Dorsolateral prefrontal cortex (tissue), 120 donors: ENCODE measurements at regions of chr19 and their contacts with region 1.

Region 1: GRCh38 chr19:47514869-47515588 is at the start of gene NAPA:
- DNase-seq: peak; percentile 100
- H3K4me3 ChIP-seq: peak within 1 kb of the TSS; percentile 70 to 100 (median 98)
- H3K27ac ChIP-seq: peak within 1 kb of the TSS; percentile 82 to 99 (median 96)
- H3K27me3 ChIP-seq: no peaks in the 10 kb centered on the region
- CTCF ChIP-seq: peak in 10 of 56 donors; percentile 2 to 100 (median 99)
- total RNA-seq, gene NAPA: 102 to 294 (median 206) TPM

Region 2: DNA sequence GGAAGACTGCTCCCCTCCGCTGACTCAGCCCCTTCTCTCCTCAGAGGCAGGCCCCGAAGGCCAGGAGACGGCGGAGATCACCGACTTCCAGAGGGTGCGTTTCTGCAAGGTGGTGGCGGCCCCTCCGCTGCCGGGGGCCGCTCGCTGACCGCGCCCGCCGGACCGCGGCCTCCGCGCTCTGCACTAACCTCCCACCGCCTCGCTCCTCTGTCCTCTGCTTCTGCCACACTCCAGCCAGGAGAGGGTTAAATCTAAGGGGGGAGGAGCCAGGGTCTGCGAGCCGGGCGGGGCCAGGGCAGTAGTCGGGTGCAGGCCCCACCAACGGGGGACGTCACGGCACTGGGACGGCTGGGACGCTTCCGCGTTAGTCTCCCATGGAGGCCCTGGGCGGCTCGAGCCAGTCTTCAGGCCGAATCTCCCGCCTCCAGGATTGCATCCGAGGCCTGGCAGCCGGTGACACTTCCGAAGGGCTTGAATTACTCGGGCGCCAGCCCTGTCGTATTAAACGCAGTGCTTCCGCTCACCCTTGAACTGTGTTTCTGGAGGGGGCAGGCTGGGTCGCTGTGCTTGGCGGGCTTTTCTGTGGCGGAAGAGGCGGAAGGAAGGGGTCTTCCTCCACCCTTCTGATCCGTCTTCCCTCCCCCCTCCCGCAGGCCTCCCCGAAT is 241.6 kb before region 1 on chr19:
- intact Hi-C with region 1: loop called in 1 of 2 experiments (anchors 10 kb)
- DNase-seq: peak; percentile 82 to 94 (median 91)
- H3K4me3 ChIP-seq: peak overlapping the region; percentile 62 to 96 (median 81)
- H3K27ac ChIP-seq: peak overlapping the region; percentile 68 to 99 (median 96)
- H3K27me3 ChIP-seq: no peaks in the 10 kb centered on the region
- CTCF ChIP-seq: peak in 9 of 56 donors; percentile 4 to 20 (median 6)

Region 3: DNA sequence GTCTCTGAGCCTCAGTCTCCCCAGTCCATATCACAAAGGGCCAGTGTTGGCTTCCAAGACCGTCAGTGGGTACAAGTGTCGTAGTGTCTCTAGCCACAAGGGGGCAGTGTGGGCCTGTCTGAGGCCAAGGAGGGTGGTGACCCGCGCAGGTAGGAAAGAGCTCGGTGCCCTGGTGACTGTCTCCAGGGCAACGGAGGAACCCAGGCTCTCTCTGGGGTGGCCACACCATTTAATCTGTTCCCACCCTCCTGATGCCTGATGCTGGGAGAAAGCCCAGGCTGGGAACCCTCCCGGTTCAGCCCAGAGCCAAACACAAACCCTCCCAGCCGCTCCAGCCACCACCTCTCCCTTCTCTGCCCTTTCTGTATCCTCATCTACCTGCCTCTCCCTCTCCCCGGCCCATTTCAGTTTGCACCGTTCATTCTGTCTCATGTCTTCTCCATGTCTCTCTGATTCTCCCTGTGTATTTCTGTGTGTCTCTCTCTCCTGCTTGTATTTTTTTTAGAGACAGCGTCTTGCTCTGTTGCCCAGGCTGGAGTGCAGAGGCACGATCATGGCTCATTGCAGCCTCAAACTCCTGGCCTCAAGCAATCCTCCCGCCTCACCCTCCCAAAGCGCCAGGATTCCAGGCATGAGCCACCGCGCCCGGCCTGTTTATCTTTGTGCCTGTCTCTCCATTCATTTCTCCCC is 78.2 kb before region 1 on chr19:
- intact Hi-C with region 1: loop called (anchors 2 to 5 kb)
- DNase-seq: peak; percentile 68 to 94 (median 84)
- H3K4me3 ChIP-seq: peak overlapping the region in 9 of 59 donors; percentile 1 to 40 (median 24)
- H3K27ac ChIP-seq: peak overlapping the region in 35 of 59 donors; percentile 3 to 83 (median 38)
- H3K27me3 ChIP-seq: peaks cover 0 to 9% (median 0%) of the 10 kb centered on the region in 45 donors
- CTCF ChIP-seq: peak; percentile 34 to 98 (median 92)

Region 4: DNA sequence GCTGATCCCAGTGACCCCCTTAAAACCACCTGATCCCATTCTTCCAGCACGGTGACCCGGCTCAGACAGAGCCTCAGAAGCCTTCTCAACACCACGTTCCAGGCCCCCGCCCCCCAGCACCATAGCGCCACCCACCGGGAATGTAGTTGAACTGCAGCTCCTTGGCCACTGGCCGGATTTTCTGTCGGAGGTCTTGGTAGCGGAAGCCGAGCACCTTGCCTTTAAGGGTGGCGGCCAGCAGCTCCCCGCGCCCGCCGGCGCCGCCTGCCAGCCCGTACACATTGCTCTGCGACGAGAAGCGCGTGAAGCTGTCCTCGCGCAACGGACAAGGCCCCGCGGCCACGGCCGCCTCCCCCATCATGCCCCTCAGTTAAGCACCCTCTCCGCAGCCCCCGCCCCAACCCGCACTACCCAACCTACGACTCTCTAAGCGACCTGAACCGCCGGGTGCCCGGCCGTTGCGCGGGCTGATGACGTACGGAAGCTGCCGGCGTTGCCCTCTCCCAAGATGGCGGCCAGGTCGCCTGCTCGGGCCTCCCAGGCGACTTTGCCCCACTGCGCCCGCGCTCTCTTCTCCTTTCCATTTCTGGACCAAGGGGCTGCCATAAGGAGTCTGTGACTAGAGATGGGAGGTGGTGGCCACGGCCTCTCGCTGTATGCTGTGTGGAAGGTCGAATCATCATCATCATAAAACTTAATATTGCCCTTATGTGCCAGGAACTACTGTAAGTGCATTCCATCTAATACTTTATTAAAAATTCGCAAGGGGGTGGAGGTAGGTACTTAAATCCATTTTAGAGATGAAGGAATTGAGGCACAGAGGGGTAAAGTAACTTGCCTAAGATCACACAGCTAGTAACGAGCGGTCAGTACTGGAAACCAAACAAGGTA is 31.0 kb before region 1 on chr19 and contains the start of gene KPTN:
- intact Hi-C with region 1: loop called (anchors 1 to 2 kb)
- DNase-seq: peak; percentile 78 to 90 (median 87)
- H3K4me3 ChIP-seq: peak within 1 kb of the TSS; percentile 37 to 96 (median 76)
- H3K27ac ChIP-seq: peak within 1 kb of the TSS; percentile 68 to 98 (median 94)
- H3K27me3 ChIP-seq: no peaks in the 10 kb centered on the region
- CTCF ChIP-seq: peak; percentile 50 to 93 (median 80)
- total RNA-seq, gene KPTN: 9.5 to 40.3 (median 18.4) TPM

Region 5: GRCh38 chr19:47600246-47601179 is 85.5 kb after region 1 on chr19:
- intact Hi-C with region 1: loop called in 1 of 2 experiments (anchors 2 kb)
- DNase-seq: peak; percentile 98 to 100 (median 100)
- H3K4me3 ChIP-seq: peak overlapping the region; percentile 47 to 89 (median 73)
- H3K27ac ChIP-seq: peak overlapping the region; percentile 41 to 94 (median 83)
- H3K27me3 ChIP-seq: no peaks in the 10 kb centered on the region
- CTCF ChIP-seq: peak in 34 of 56 donors; percentile 4 to 63 (median 28)

Region 6: GRCh38 chr19:47608074-47608918 is 93.3 kb after region 1 on chr19:
- intact Hi-C with region 1: loop called in 1 of 2 experiments (anchors 1 kb)
- DNase-seq: peak; percentile 76 to 98 (median 91)
- H3K4me3 ChIP-seq: peak overlapping the region; percentile 73 to 100 (median 98)
- H3K27ac ChIP-seq: peak overlapping the region; percentile 77 to 99 (median 95)
- H3K27me3 ChIP-seq: no peaks in the 10 kb centered on the region
- CTCF ChIP-seq: peak in 12 of 56 donors; percentile 1 to 20 (median 14)

Region 7: GRCh38 chr19:47697863-47698609 is 183.0 kb after region 1 on chr19:
- intact Hi-C with region 1: loop called (anchors 1 kb)
- DNase-seq: peak; percentile 74 to 89 (median 86)
- H3K4me3 ChIP-seq: peak overlapping the region in 5 of 59 donors; percentile 3 to 30 (median 11)
- H3K27ac ChIP-seq: peak overlapping the region in 58 of 59 donors; percentile 11 to 95 (median 85)
- H3K27me3 ChIP-seq: no peaks in the 10 kb centered on the region
- CTCF ChIP-seq: peak; percentile 80 to 99 (median 97)